CD14-positive monocyte (primary cell): ENCODE measurements at regions of chr10 and their contacts with region 1.

Region 1: DNA sequence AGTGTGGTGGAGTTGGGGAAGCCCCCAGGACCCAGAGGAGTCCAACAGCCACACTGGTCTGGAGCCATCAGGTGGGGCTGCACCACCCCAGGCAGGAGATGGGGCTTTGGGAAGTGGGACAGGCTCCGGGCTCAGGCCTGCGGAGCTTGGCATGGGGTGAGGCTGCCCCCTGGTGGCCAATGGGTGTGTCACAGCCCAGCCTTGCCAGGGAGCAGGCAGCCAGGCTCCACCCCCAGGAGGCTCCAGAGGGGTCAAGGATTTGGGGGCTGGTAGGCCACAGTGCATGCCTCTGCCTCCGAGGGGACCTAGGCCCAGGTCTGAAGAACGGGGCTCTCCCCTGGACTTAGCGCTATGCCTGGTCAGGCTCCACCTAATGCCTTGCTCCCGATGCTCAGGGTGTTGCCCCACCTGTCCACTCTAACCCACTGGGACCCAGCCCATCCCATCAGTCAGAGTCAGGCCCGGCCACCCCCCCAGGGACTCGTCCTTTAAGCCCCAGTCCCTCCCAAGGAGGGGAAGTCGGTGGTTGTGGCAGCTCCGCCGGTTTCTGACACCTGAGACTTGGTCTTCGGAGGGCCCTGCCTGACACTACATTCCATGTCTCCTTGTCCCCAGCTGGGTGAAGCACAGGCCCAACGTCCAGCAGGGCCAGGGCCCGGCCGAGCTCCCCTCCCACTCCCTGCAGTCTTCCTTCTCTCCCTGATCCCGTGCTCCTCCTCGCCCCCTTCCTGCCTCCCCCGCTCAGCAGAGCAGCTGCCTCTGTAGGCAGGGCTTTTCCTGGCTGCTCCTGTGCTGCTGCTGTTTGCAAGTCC is 11.3 kb upstream of the SAMD8 start:
- DNase-seq: peak; percentile 65 to 75 (median 70)
- H3K4me3 ChIP-seq: no peak overlapping the region
- H3K4me3 Mint-ChIP-seq: peak overlapping the region in 1 of 2 donors; percentile 54
- H3K27ac ChIP-seq: no peak overlapping the region
- H3K27ac Mint-ChIP-seq: peak overlapping the region in 1 of 7 donors; percentile 57
- H3K4me1 ChIP-seq: peaks cover 12 to 14% of the 10 kb centered on the region in 2 donors
- H3K4me1 Mint-ChIP-seq: peaks cover 17% of the 10 kb centered on the region
- H3K27me3 ChIP-seq: no peaks in the 10 kb centered on the region
- H3K27me3 Mint-ChIP-seq: peaks cover 0 to 8% (median 1%) of the 10 kb centered on the region in 3 donors
- CTCF ChIP-seq: peak; percentile 98

Region 2: DNA sequence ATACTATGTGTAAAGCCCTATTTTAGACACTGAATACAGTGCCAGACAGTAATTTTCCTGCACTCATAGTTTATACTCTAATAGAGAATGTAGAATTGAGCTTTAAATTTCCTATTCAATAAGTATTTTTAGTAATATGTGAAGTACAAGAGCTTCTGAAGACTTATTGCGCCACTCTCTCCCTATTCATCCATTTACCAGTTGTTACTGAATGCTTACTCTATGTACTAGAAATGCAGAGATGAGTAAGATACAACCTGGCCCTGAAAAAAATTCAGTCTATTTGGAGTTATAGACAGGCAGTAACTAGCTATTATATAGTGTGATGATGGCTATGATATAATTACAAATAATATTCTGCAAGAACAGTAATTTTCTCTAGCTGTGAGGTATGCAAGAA is 850.3 kb before region 1 on chr10:
- intact Hi-C with region 1: loop called in 1 of 2 experiments (anchors 5 kb)
- DNase-seq: no peak
- H3K4me3 ChIP-seq: no peak overlapping the region
- H3K4me3 Mint-ChIP-seq: no peak overlapping the region
- H3K27ac ChIP-seq: no peak overlapping the region
- H3K27ac Mint-ChIP-seq: no peak overlapping the region
- H3K4me1 ChIP-seq: peaks cover 0 to under 1% of the 10 kb centered on the region in 2 donors
- H3K4me1 Mint-ChIP-seq: peaks cover under 1% of the 10 kb centered on the region
- H3K27me3 ChIP-seq: no peaks in the 10 kb centered on the region
- H3K27me3 Mint-ChIP-seq: no peaks in the 10 kb centered on the region
- CTCF ChIP-seq: no peak